GM12878 (cell line): ENCODE measurements at regions of chr16 and their contacts with region 1.

Region 1: GRCh38 chr16:370443-370842 is at the start of gene MRPL28:
- DNase-seq: peak; percentile 87
- ATAC-seq: peak; percentile 99
- H3K4me3 ChIP-seq: peak within 1 kb of the TSS; percentile 65
- H3K27ac ChIP-seq: peak within 1 kb of the TSS; percentile 61
- H3K4me1 ChIP-seq: peaks cover 4% of the 10 kb centered on the region; the same call in 1 of the 2 replicates
- H3K27me3 ChIP-seq: no peaks in the 10 kb centered on the region
- CTCF ChIP-seq: no peak
- EP300 ChIP-seq: no peak
- POLR2A ChIP-seq: peak; percentile 44
- RAD21 ChIP-seq: no peak
- polyA plus RNA-seq, gene MRPL28: 1.6 to 17.9 TPM

Region 2: GRCh38 chr16:381789-382717 is 11.6 kb after region 1 on chr16 and contains the start of gene PGAP6:
- CTCF ChIA-PET with region 1: no interaction called
- POLR2A ChIA-PET with region 1: interaction called, 22 read pairs
- RAD21 ChIA-PET with region 1: interaction called, 6 read pairs
- SMC1A ChIA-PET with region 1: interaction called, 6 read pairs
- in situ Hi-C with region 1: no loop called
- intact Hi-C with region 1: no loop called
- DNase-seq: no peak
- ATAC-seq: peak; percentile 48
- H3K4me3 ChIP-seq: peak within 1 kb of the TSS; percentile 97
- H3K27ac ChIP-seq: peak within 1 kb of the TSS; percentile 56
- H3K4me1 ChIP-seq: peaks cover 14% of the 10 kb centered on the region
- H3K27me3 ChIP-seq: no peaks in the 10 kb centered on the region
- CTCF ChIP-seq: no peak
- EP300 ChIP-seq: no peak
- POLR2A ChIP-seq: peak; percentile 82
- RAD21 ChIP-seq: no peak
- polyA plus RNA-seq, gene PGAP6: 0.76 to 2.9 TPM

Region 3: DNA sequence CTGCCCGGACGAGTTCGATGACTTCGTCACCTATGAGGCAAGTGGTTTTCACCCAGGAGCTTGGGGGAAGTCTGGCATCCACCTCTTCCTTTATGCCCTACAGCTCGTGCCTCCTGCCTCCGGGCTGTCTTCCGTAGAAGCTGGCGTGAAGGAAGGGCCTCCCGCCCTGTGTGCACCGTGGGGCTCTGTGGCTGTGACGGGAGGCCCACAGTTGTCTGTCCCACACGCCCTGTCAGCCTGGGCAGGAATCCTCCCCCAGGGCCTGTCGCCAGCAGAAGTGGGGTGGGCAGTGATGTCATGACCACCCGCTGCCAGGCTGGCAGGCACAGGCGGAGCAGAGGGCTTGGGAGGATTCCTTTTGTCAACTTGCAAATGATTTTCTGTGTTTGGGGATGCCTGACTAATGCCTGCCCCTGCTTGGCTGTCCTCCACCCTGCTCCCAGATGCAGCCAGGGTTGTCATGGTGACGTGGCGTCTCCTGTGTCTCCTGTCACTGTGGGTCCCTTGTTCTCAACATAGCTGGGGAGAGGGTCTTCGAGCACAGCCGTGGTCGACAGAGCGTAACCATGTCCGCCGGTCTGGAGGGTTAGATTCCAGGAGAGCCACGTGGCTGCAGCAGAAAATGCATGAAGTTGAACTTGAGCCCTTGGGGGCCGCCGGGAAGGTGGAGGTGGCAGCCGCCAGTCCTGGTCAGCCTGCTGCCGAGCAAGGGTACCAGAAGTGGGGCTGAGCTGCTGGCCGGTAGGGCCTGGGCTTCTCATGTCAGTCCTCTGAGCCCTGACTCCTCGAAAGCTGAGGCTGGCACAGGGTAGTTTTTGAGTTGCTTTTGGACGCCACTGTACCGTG is 101.1 kb after region 1 on chr16:
- CTCF ChIA-PET with region 1: no interaction called
- POLR2A ChIA-PET with region 1: no interaction called
- RAD21 ChIA-PET with region 1: no interaction called
- SMC1A ChIA-PET with region 1: no interaction called
- in situ Hi-C with region 1: no loop called
- intact Hi-C with region 1: no loop called
- DNase-seq: no peak
- ATAC-seq: no peak
- H3K4me3 ChIP-seq: no peak overlapping the region
- H3K27ac ChIP-seq: no peak overlapping the region
- H3K4me1 ChIP-seq: no peaks in the 10 kb centered on the region
- H3K27me3 ChIP-seq: no peaks in the 10 kb centered on the region
- CTCF ChIP-seq: no peak
- EP300 ChIP-seq: no peak
- POLR2A ChIP-seq: no peak
- RAD21 ChIP-seq: no peak

Region 4: GRCh38 chr16:483341-484075 is 113.1 kb after region 1 on chr16:
- CTCF ChIA-PET with region 1: no interaction called
- POLR2A ChIA-PET with region 1: no interaction called
- RAD21 ChIA-PET with region 1: no interaction called
- SMC1A ChIA-PET with region 1: no interaction called
- in situ Hi-C with region 1: no loop called
- intact Hi-C with region 1: no loop called
- DNase-seq: no peak
- ATAC-seq: no peak
- H3K4me3 ChIP-seq: no peak overlapping the region
- H3K27ac ChIP-seq: no peak overlapping the region
- H3K4me1 ChIP-seq: no peaks in the 10 kb centered on the region
- H3K27me3 ChIP-seq: no peaks in the 10 kb centered on the region
- CTCF ChIP-seq: no peak
- EP300 ChIP-seq: no peak
- POLR2A ChIP-seq: no peak
- RAD21 ChIP-seq: no peak